RWPE1 (cell line): ENCODE measurements at regions of chr11 and their contacts with region 1.

Region 1: GRCh38 chr11:221998-222789 is 13.9 kb downstream of the SIRT3 start:
- DNase-seq: no peak
- H3K27ac ChIP-seq: peak overlapping the region; percentile 72
- CTCF ChIP-seq: no peak

Region 2: GRCh38 chr11:477052-477715 is 255.0 kb after region 1 on chr11:
- CTCF ChIA-PET with region 1: no interaction called
- POLR2A ChIA-PET with region 1: interaction called, 11 read pairs
- DNase-seq: no peak
- H3K27ac ChIP-seq: no peak overlapping the region
- CTCF ChIP-seq: no peak